Activated CD4-positive, alpha-beta memory T cell treated with anti-CD3 and anti-CD28 coated beads, Interleukin-2, amount 10 ng/mL, durations not matched to agents 7 days and 5 days (primary cell): ENCODE measurements at regions of chr1 and their contacts with region 1.

Region 1: DNA sequence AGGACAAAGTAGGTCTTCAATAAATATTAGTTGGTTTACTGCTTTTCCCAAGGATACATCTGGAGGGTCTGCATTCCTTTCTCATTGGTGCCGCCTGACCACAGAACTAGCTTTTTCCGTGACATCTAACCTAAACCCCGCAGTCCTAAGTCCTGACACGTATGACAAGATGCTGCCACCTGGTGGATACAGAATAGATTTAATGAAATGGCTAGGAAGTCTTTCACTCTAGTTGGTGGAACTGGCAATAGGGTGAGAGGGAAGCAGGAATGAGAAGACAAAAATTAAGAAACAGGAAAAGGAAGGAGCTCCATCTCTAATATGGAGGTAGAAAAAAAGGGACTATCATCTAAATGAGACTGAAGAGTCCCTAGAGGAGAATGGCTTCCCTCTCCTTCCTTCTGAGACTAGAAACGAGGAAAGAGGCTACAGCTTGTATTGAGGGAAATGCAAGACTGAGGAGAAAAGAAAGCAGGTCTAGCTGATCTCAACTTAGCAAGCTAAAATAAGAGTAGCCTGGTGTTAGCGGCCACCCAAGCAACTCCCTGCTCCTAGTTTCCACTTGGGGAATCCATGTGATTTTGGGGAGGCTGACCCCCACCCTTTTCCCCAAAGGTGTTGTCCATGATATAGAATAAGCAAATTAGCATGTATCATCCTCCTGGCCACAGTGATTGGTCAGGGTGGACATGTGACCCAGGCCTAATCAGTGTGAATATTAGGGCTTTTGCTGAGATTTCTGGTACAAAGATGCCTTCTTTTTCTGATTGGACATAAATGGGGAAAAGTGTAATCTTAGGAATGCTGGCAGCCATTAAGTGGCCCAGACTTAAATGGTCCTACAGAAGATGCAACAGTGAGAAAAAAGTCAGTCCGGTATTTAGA is 5.9 kb downstream of the RFX5 start:
- DNase-seq: peak; percentile 51
- H3K4me3 Mint-ChIP-seq: no peak overlapping the region
- H3K27ac Mint-ChIP-seq: no peak overlapping the region
- H3K4me1 Mint-ChIP-seq: peaks cover 30% of the 10 kb centered on the region
- H3K27me3 Mint-ChIP-seq: no peaks in the 10 kb centered on the region

Region 2: GRCh38 chr1:151222130-151222529 is 119.0 kb before region 1 on chr1:
- CTCF ChIA-PET with region 1: no interaction called
- POLR2A ChIA-PET with region 1: no interaction called
- DNase-seq: no peak
- H3K4me3 Mint-ChIP-seq: no peak overlapping the region
- H3K27ac Mint-ChIP-seq: no peak overlapping the region
- H3K4me1 Mint-ChIP-seq: peaks cover 6% of the 10 kb centered on the region
- H3K27me3 Mint-ChIP-seq: no peaks in the 10 kb centered on the region

Region 3: DNA sequence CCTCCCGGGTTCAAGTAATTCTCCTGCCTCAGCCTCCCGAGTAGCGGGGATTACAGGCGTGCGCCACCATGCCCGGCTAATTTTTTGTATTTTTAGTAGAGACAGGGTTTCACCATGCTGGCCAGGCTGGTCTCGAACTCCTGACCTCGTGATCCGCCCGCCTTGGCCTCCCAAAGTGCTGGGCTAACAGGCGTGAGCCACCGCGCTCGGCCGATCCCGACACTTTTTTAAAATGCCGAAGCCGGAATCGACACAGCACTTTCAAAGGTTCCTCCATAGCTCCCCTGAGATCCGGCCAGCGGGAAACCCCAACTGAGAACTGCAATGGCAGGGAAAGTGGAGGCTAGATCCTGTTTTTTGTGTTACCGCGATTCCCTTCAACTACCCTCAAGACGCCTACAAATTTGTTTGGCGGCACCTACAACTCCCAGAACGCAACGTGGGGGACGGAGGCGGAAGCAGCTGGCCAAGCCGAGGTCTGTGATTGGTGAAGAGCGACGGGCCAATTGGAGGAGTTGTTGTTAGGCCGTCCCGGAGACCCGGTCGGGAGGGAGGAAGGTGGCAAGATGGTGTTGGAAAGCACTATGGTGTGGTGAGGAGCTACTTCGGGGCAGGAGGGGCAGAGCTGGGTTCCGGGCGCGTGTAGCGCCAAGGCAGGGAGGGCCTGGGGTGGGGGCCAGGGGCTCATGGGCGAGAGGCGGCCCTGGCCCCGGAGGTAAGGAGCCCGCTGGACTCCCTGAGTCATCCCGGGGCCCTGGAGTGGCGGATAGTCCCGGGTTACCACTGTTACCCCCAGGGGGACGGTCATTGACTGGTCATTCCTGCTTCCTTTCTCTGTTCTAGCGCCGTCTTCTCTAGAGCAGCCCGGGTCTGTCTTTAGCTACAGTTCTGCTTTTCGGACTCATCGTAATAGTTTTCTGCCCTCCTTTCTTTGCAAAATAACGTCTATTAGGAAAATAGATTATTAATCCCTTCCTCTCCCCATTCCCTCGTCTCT is 86.6 kb before region 1 on chr1 and contains the start of gene PSMD4:
- CTCF ChIA-PET with region 1: interaction called, 24 read pairs
- POLR2A ChIA-PET with region 1: interaction called, 7 read pairs
- DNase-seq: peak; percentile 95
- H3K4me3 Mint-ChIP-seq: peak within 1 kb of the TSS; percentile 87
- H3K27ac Mint-ChIP-seq: peak within 1 kb of the TSS; percentile 83
- H3K4me1 Mint-ChIP-seq: peaks cover 29% of the 10 kb centered on the region
- H3K27me3 Mint-ChIP-seq: no peaks in the 10 kb centered on the region
- total RNA-seq, gene PSMD4: 178 to 188 TPM

Region 4: DNA sequence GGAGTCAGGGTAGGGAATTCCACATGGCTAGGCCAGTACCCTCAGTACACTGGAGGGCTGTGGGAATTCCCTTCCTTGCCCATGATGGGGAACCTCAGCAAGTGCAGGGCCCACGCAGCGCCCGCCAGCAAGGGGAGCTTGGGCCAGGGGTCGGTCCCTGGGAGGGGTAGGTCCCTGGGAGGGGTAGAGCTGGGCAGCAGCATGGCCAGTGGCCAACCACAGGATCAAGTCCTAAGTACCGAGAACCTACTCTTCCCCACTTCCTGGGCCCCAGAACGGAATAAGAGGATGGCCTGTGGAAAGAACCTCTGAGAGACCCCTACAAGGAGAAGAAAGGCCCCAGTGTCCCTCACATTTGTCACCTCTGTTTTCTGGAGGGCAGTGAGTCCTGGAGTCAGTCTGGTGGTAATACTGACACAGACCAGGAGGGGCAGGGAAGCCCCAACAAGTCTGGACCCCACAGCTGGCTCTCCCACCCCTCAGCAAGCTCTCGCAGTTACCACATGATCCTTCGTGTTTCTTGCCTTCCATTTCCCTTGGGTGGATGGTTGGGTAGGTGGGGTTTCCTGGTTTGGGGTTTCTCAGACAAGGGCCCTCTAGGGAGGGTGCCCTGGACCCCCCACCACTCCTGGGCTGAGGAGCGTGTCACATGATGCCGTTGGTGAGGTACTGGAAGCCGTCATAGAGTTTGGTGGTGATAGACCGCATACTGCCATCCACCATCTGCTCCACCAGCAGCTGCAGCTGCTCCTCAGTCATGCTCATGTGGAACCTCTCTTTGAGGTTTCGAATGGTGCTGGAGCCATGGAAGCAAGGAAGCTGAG is 48.7 kb before region 1 on chr1:
- CTCF ChIA-PET with region 1: interaction called, 11 read pairs
- POLR2A ChIA-PET with region 1: interaction called, 7 read pairs
- DNase-seq: no peak
- H3K4me3 Mint-ChIP-seq: no peak overlapping the region
- H3K27ac Mint-ChIP-seq: peak overlapping the region; percentile 31
- H3K4me1 Mint-ChIP-seq: peaks cover 4% of the 10 kb centered on the region
- H3K27me3 Mint-ChIP-seq: no peaks in the 10 kb centered on the region

Region 5: DNA sequence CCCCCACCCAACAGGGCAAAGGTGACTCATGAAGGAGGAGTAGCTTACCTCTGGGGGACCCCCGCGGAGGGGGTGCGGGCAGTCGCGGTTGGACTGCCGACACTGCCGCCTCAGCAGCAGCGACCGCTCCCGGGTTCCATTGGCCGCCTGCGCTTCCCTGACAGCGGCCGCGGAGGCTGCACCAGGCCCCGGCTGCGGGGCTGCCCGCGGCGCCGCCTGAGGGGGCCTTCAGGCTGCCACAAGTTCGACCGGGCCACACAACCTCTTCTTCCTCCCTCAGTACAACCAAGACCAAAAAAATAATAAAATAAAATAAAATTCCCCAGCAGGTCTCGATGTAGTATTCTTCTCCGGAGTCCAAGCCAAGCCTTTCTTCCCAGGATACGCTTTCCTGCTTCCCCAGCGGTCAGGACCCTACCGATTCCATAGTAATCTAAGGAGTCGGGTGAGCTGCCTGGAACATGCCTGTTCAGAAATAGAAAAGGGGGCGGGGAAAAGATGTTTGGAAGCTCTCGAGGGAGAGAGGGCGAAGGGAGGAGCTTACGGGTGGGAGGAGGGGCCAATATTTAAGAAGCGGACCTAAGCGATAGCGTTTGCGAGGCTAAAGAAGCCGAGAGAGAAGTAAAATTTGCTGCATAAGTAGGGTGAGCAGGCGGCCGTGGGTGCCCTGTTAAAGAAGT is 13.7 kb before region 1 on chr1 and contains the start of gene PI4KB:
- CTCF ChIA-PET with region 1: interaction called, 81 read pairs
- POLR2A ChIA-PET with region 1: interaction called, 20 read pairs
- DNase-seq: peak; percentile 93
- H3K4me3 Mint-ChIP-seq: peak within 1 kb of the TSS; percentile 98
- H3K27ac Mint-ChIP-seq: peak within 1 kb of the TSS; percentile 95
- H3K4me1 Mint-ChIP-seq: peaks cover 36% of the 10 kb centered on the region
- H3K27me3 Mint-ChIP-seq: no peaks in the 10 kb centered on the region
- total RNA-seq, gene PI4KB: 71.2 to 72.9 TPM

Region 6: GRCh38 chr1:151399890-151400495 is 58.9 kb after region 1 on chr1:
- CTCF ChIA-PET with region 1: interaction called, 11 read pairs
- POLR2A ChIA-PET with region 1: interaction called, 9 read pairs
- DNase-seq: peak; percentile 40
- H3K4me3 Mint-ChIP-seq: peak overlapping the region; percentile 89
- H3K27ac Mint-ChIP-seq: peak overlapping the region; percentile 97
- H3K4me1 Mint-ChIP-seq: peaks cover 35% of the 10 kb centered on the region
- H3K27me3 Mint-ChIP-seq: no peaks in the 10 kb centered on the region